Activated CD4-positive, alpha-beta memory T cell treated with anti-CD3 and anti-CD28 coated beads for 36 hours (primary cell): ENCODE measurements at regions of chr7 and their contacts with region 1.

Region 1: GRCh38 chr7:71733107-71733870 is 601.3 kb downstream of the GALNT17 start:
- DNase-seq: peak; percentile 73
- H3K4me3 Mint-ChIP-seq: no peak overlapping the region
- H3K27ac Mint-ChIP-seq: no peak overlapping the region
- H3K4me1 Mint-ChIP-seq: no peaks in the 10 kb centered on the region
- H3K27me3 Mint-ChIP-seq: peaks cover 2% of the 10 kb centered on the region

Region 2: DNA sequence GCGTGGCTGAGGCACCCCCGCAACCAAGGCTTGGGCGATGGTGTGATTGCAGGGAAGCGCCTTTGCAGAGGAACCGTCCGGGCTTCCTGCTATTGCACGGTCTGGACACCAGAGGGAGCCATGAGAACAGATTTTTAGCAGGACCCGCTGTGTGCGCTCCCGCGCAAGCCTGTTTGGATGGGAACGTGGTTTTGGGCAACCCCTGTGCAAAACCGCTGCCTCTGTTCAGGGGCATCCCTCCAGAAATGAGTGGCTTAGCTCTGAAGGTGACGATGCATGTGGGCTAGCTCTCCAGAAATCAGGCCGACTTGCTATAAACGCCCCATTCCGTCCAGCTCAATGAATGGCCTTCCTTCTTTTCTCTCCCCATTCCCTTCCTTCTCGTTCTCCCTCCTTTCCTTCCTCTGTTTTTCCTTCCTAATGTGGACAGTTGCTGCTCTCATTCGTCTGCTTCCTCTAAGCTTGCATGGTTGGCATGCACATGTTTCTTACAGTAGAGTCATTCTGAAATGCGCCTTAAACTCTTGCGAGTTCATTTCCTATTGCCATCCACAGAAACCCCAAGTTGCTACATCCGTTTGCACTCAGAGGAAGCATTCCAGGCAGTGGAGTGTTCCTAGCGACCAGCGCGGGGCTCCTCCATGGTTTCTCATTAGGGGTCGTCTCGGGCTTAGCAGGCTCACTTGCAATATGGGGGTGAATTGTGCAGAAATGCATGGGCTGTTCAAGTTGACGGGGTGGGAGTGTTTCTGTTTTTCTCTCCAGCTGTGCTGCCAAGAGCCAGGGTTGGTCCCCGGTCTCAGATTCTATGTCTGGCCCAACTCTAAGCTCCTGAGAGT is 903.8 kb before region 1 on chr7:
- CTCF ChIA-PET with region 1: interaction called, 21 read pairs
- POLR2A ChIA-PET with region 1: no interaction called
- intact Hi-C with region 1: loop called (anchors 1 kb)
- DNase-seq: peak; percentile 78
- H3K4me3 Mint-ChIP-seq: no peak overlapping the region
- H3K27ac Mint-ChIP-seq: no peak overlapping the region
- H3K4me1 Mint-ChIP-seq: peaks cover 10% of the 10 kb centered on the region
- H3K27me3 Mint-ChIP-seq: peaks cover 1% of the 10 kb centered on the region

Region 3: DNA sequence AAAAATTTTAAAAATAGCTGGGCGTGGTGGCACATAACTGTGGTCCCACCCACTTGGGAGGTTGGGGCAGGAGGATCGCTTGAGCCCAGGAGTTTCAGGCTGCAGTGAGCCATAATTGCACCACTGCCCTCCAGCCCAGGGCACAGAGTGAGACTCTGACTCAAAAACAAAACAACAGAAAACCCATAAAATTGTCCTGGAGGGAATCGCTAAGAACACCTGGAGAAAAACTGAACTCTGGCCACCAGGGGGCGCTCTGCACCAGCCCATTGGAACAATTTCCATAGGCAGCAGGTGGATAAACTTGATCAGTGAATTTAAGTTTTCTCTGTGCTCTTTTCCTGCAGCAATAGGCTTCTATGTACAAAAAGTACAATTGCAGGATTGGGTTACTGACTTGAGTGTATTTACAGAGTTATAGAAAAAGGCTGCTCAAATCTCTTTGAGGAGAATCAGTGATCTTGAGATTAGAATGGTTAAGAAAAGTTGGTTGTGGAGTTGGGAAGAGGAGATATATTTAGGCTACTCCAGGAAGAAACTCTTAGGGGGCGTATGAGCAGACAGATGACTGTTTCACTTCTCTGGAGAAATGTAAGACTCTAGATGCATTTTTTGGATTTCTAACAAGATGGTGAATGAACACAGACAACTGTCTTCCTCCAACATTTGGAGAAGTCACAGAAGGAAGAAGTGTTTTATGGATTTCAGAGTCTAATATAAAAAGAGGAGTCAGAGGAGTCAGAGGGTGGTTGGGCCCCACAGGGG is 876.2 kb before region 1 on chr7:
- CTCF ChIA-PET with region 1: interaction called, 6 read pairs
- POLR2A ChIA-PET with region 1: no interaction called
- intact Hi-C with region 1: loop called (anchors 1 kb)
- DNase-seq: peak; percentile 71
- H3K4me3 Mint-ChIP-seq: no peak overlapping the region
- H3K27ac Mint-ChIP-seq: no peak overlapping the region
- H3K4me1 Mint-ChIP-seq: no peaks in the 10 kb centered on the region
- H3K27me3 Mint-ChIP-seq: no peaks in the 10 kb centered on the region

Region 4: GRCh38 chr7:71661671-71662224 is 71.5 kb before region 1 on chr7:
- CTCF ChIA-PET with region 1: no interaction called
- POLR2A ChIA-PET with region 1: no interaction called
- intact Hi-C with region 1: no loop called
- DNase-seq: no peak
- H3K4me3 Mint-ChIP-seq: no peak overlapping the region
- H3K27ac Mint-ChIP-seq: no peak overlapping the region
- H3K4me1 Mint-ChIP-seq: no peaks in the 10 kb centered on the region
- H3K27me3 Mint-ChIP-seq: no peaks in the 10 kb centered on the region